PC-9 (cell line): ENCODE measurements at regions of chr4 and their contacts with region 1.

Region 1: GRCh38 chr4:185323606-185324005 is 72.1 kb downstream of the LRP2BP start:
- DNase-seq: no peak
- H3K4me3 ChIP-seq: no peak overlapping the region
- H3K27ac ChIP-seq: no peak overlapping the region
- H3K4me1 ChIP-seq: peaks cover 13% of the 10 kb centered on the region
- H3K27me3 ChIP-seq: no peaks in the 10 kb centered on the region
- CTCF ChIP-seq: no peak

Region 2: DNA sequence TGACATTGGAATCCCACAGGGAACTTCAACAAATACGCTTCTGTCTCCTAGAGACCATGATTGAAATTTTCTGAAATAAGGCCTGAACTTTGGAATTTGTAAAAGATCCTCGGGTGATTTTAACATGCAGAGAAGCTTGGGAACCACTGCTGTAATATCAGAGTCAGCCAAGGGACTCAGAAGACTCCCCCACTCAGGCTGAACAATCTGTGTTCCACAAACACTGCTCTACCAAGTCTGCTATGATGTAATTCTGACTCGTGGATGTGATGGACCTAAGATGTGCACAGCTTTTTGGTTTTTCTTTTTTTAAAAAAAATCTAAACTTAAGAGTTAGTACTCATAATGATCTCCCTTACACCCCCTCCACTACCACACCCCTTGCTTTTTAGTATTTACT is 46.1 kb after region 1 on chr4:
- CTCF ChIA-PET with region 1: interaction called, 12 read pairs
- POLR2A ChIA-PET with region 1: no interaction called
- intact Hi-C with region 1: no loop called
- DNase-seq: no peak
- H3K4me3 ChIP-seq: no peak overlapping the region
- H3K27ac ChIP-seq: no peak overlapping the region
- H3K4me1 ChIP-seq: no peaks in the 10 kb centered on the region
- H3K27me3 ChIP-seq: no peaks in the 10 kb centered on the region
- CTCF ChIP-seq: no peak

Region 3: GRCh38 chr4:185742766-185743165 is 419.2 kb after region 1 on chr4:
- CTCF ChIA-PET with region 1: no interaction called
- POLR2A ChIA-PET with region 1: no interaction called
- intact Hi-C with region 1: no loop called
- DNase-seq: peak; percentile 67 to 73
- H3K4me3 ChIP-seq: no peak overlapping the region
- H3K27ac ChIP-seq: 0 out of 2 replicates have a peak overlapping the region, but pooled peaks have one; percentile 29
- H3K4me1 ChIP-seq: peaks cover 16% of the 10 kb centered on the region
- H3K27me3 ChIP-seq: no peaks in the 10 kb centered on the region
- CTCF ChIP-seq: no peak

Region 4: GRCh38 chr4:185817403-185817818 is 493.8 kb after region 1 on chr4:
- CTCF ChIA-PET with region 1: no interaction called
- POLR2A ChIA-PET with region 1: no interaction called
- intact Hi-C with region 1: no loop called
- DNase-seq: peak in 1 of 2 experiments; percentile 28
- H3K4me3 ChIP-seq: no peak overlapping the region
- H3K27ac ChIP-seq: no peak overlapping the region
- H3K4me1 ChIP-seq: no peaks in the 10 kb centered on the region
- H3K27me3 ChIP-seq: no peaks in the 10 kb centered on the region
- CTCF ChIP-seq: no peak

Region 5: GRCh38 chr4:185865901-185866328 is 542.3 kb after region 1 on chr4:
- CTCF ChIA-PET with region 1: no interaction called
- POLR2A ChIA-PET with region 1: no interaction called
- intact Hi-C with region 1: no loop called
- DNase-seq: peak; percentile 67 to 90
- H3K4me3 ChIP-seq: peak overlapping the region; percentile 1; the same call in 1 of the 2 replicates
- H3K27ac ChIP-seq: peak overlapping the region; percentile 96
- H3K4me1 ChIP-seq: peaks cover 34% of the 10 kb centered on the region
- H3K27me3 ChIP-seq: no peaks in the 10 kb centered on the region
- CTCF ChIP-seq: no peak

Region 6: DNA sequence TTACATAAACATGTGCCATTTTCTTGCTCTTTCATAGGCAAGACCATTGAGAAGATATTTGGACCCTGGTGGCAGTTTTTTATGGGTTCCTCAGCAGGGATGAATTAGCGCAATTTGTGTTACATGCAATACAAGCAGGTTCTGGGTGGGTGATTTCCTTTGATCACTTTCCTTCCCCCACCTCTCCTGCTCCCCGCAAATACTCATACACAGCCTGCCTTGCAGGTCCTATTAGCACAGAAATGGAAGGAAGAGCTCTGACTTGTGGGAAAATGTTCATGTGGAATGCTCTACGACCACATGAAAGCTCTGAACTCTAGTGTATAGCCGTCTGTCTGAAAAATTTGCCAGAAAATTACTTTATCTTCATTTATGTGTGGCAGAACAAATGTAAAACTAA is 1761.1 kb after region 1 on chr4:
- CTCF ChIA-PET with region 1: no interaction called
- POLR2A ChIA-PET with region 1: no interaction called
- intact Hi-C with region 1: no loop called
- DNase-seq: no peak
- H3K4me3 ChIP-seq: no peak overlapping the region
- H3K27ac ChIP-seq: no peak overlapping the region
- H3K4me1 ChIP-seq: no peaks in the 10 kb centered on the region
- H3K27me3 ChIP-seq: no peaks in the 10 kb centered on the region
- CTCF ChIP-seq: no peak